ENCODE measurements at regions of chr21 and their contacts with region 1.

Region 1: GRCh38 chr21:42737951-42738590 is 84.7 kb downstream of the PDE9A start:
- DNase-seq: peak; percentile 55
- ATAC-seq: peak; percentile 82
- H3K4me3 Mint-ChIP-seq: peak overlapping the region; percentile 57
- H3K27ac Mint-ChIP-seq: peak overlapping the region; percentile 98
- H3K4me1 Mint-ChIP-seq: peaks cover 59% of the 10 kb centered on the region
- H3K27me3 Mint-ChIP-seq: no peaks in the 10 kb centered on the region

Region 2: DNA sequence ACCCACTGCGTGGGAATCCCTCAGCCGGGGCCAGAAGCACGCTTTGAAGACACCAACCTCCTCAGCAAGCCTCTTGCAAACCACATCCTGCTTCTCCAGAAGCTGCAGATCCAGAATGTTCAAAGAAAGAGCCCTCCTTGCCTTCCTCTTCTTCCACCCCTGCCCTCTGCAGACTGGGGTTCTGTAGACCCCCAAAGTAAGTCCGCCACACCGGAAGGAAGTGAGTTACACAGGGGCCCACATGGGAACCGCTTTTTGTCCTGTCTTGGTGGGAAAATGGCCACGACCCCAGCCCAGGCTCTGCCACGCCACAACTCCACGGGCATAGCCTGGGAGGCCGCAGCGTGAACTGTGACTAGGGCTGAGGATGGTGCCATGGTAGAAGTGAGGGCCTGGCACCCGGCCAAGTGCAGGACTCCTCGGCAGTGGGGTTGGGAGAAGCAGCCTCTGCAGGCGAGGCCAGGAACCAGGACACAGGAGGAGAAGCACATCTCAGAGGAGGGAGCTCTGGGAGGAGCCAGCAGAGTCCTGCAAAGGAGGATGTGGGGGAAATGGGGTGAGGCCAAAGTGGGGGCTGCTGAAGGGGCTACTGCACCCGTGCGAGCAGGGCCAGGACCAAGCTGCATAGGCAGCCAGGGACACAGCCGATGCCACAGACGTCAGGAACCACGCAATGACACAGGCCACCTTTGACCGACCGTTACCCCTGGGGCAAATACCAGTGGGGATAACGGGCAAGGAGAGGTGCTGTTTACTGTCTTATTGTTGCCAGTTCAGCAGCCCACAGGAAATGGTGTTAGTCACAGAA is 53.8 kb before region 1 on chr21:
- CTCF ChIA-PET with region 1: interaction called, 4 read pairs
- POLR2A ChIA-PET with region 1: interaction called, 13 read pairs
- DNase-seq: peak; percentile 75
- ATAC-seq: peak; percentile 79
- H3K4me3 Mint-ChIP-seq: peak overlapping the region; percentile 82
- H3K27ac Mint-ChIP-seq: peak overlapping the region; percentile 100
- H3K4me1 Mint-ChIP-seq: peaks cover 58% of the 10 kb centered on the region
- H3K27me3 Mint-ChIP-seq: no peaks in the 10 kb centered on the region

Region 3: GRCh38 chr21:42724226-42724920 is 13.7 kb before region 1 on chr21:
- CTCF ChIA-PET with region 1: no interaction called
- POLR2A ChIA-PET with region 1: no interaction called
- DNase-seq: no peak
- ATAC-seq: no peak
- H3K4me3 Mint-ChIP-seq: no peak overlapping the region
- H3K27ac Mint-ChIP-seq: no peak overlapping the region
- H3K4me1 Mint-ChIP-seq: peaks cover 22% of the 10 kb centered on the region
- H3K27me3 Mint-ChIP-seq: no peaks in the 10 kb centered on the region

Measured in activated CD8-positive, alpha-beta T cell treated with anti-CD3 and anti-CD28 coated beads, Interleukin-2, amount 10 ng/mL, durations not matched to agents 7 days and 5 days (primary cell).